Spleen (tissue), 13 donors: ENCODE measurements at regions of chr20 and their contacts with region 1.

Region 1: DNA sequence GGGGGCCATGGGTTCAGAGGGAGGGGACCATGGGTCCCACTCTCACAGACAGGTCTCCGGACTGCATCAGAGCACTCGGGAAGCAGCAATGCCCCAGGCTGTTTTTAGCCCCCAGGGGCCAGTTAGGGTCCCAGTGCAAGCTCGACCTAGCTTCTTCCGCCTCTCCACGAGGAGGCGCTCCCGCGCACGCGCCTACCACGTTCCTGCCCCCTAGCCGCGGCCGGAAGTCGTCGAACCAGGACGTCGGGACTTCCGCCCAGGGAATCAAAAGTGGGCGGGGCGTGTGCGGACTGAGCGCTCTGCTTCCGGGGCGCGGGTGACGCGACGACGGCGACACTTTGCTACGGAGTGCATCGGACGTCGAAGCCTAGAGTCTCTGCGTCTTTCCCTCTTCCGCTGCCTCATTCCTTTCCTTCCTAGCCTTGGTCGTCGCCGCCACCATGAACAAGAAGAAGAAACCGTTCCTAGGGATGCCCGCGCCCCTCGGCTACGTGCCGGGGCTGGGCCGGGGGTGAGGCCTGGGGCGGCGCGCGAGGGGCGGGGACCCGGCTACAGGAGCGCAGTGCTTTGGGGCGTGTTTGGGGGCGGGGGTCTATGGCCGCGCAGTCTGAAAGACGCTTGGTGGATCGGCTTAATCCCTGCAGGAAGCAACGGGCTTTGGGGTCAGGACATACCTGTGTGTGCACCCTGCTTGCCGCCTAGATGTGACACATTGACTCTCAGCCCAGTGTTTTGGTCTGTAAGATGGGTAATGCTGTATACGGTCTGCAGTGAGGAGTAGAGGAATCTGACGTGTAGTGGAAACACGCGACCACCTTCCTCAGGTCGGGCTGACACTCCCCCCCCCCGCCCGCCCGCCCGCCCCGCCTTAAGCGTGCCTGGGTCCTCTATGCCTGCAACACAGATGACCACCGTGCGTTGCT is at the start of gene PRPF6:
- DNase-seq: peak; percentile 99
- H3K4me3 ChIP-seq: peak within 1 kb of the TSS; percentile 70 to 96 (median 87)
- H3K27ac ChIP-seq: peak within 1 kb of the TSS; percentile 83 to 93 (median 90)
- H3K4me1 ChIP-seq: peaks cover 41 to 75% (median 57%) of the 10 kb centered on the region in 6 donors
- H3K27me3 ChIP-seq: no peaks in the 10 kb centered on the region
- CTCF ChIP-seq: peak; percentile 59 to 90 (median 84)
- POLR2A ChIP-seq: peak in 1 of 3 donors; percentile 15
- total RNA-seq, gene PRPF6: 53.4 to 71.1 (median 61.6) TPM

Region 2: DNA sequence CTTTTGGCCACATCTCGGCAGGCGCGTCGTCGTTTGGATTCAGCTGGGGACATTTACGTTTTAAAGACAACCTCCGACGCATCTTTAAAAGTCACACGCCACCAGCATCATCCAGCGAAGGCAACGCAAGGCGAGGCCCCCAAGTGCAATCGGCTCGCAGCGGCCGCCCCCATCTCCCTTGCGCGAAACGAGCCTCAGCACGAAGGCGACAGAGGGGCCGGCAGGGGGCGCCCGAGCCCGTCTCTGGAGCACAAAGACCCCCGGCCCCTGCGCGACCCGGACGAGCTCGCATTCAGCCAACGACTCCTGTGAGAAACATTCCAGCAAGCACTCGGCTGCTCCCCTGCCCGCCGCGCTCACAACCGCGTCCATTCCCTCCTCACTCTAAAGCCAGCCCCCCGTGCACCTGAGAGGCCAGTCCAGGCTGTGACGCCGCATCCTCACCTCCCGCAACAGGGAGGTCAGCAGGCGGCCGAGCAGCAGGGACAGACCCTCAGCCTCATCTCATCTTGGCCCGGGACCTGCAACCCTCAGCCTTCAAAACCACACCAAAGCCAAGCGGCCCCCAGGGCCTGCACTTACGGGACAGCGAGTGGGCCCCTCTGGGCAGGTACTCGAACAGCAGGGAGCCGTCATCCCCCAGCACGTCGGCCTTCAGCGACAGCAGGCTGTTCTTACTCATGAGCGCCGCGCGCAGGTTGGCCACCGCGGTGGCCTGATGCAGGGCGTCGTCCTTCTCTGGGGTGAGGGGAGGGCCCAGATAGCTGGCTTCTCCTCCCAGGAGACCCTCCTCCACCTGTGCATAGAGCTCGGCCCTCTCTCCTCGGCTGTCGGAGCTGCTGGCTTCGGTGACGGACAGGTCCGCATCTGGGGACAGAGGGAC is 205.7 kb before region 1 on chr20:
- intact Hi-C with region 1: no loop called
- DNase-seq: no peak
- H3K4me3 ChIP-seq: peak overlapping the region in 1 of 8 donors; percentile 39
- H3K27ac ChIP-seq: peak overlapping the region; percentile 6 to 92 (median 82)
- H3K4me1 ChIP-seq: peaks cover 0 to 77% (median 45%) of the 10 kb centered on the region in 6 donors
- H3K27me3 ChIP-seq: no peaks in the 10 kb centered on the region
- CTCF ChIP-seq: peak in 10 of 11 experiments; percentile 22 to 73 (median 60)
- POLR2A ChIP-seq: no peak

Region 3: DNA sequence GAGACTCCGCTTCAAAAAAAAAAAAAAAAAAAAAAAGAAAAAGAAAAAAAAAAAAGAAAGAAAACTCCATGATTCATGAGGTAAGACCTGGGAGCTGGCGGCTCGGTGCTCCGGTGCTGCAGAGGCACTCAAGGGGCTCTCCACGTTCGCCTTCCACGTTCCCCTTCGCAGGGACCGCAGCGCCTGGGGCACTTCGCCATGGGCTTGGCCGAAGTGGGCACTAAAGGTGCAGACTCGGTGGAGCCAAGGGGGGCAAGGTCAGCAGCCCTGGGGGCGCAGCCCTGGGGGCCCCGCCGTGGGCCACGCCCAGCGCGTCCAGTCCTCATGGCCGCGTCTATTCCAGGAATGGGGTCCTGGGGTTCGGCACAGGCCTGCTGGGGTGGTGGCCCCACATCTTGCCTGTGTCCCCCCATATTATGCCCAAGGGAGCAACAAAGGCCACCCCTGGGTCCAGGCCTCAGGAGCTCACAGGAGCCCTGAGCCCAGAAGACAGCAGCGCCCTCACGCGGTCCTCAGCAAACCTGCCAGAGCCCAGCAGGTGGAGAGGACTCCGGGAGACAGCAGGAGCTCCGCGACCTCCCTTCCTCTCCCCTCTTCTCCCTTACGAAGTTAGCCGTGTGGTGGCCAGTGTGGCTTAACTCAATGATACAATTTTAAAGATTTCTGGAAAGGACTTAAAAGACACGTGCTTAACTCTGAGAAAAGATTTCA is 171.9 kb before region 1 on chr20:
- intact Hi-C with region 1: no loop called
- DNase-seq: no peak
- H3K4me3 ChIP-seq: no peak overlapping the region
- H3K27ac ChIP-seq: peak overlapping the region in 5 of 8 donors; percentile 4 to 76 (median 73)
- H3K4me1 ChIP-seq: peaks cover 1 to 57% (median 33%) of the 10 kb centered on the region in 6 donors
- H3K27me3 ChIP-seq: no peaks in the 10 kb centered on the region
- CTCF ChIP-seq: no peak
- POLR2A ChIP-seq: no peak

Region 4: GRCh38 chr20:63819224-63819921 is 161.7 kb before region 1 on chr20:
- intact Hi-C with region 1: no loop called
- DNase-seq: no peak
- H3K4me3 ChIP-seq: peak overlapping the region in 3 of 8 donors; percentile 9 to 37 (median 23)
- H3K27ac ChIP-seq: peak overlapping the region; percentile 41 to 81 (median 64)
- H3K4me1 ChIP-seq: peaks cover 8 to 82% (median 41%) of the 10 kb centered on the region in 6 donors
- H3K27me3 ChIP-seq: no peaks in the 10 kb centered on the region
- CTCF ChIP-seq: peak in 7 of 11 experiments; percentile 8 to 51 (median 37)
- POLR2A ChIP-seq: no peak

Region 5: DNA sequence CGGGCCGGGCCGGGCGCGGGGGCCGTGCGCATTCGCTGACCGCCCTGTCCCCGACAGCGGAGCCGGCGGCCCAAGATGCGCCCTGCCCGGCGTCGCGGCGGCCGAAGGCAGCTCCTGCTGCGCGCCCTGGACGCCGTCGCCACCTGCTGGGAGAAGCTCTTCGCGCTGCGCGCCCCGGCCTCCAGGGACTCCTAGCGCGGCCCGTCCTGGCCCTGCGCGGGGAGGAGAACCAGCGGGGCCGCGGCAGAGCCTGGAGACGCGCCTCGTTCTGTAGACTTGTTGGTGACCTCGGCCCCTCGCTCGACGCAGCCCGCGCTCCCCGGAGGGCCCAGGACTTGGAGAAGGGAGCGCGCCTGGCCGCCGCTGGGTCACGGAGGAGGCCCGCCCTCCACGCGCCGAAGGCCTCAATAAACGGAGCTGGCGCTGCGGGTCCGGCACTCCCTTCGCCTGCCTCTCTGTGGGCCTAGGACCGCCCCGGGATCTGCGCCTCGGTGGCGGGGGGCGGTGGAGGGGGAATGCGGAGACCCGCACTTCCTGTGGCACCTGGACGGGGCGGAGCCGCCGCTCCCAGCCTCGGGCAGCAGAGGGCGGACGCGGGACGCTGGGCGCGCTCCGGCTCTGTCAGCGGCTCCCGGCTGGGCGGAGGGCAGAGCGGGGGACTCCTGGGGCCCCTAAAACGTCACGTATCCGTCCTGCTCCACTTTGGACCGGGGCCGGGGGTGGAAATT is 57.7 kb after region 1 on chr20:
- intact Hi-C with region 1: loop called (anchors 10 kb)
- DNase-seq: peak; percentile 97
- H3K4me3 ChIP-seq: peak overlapping the region; percentile 52 to 94 (median 66)
- H3K27ac ChIP-seq: peak overlapping the region; percentile 59 to 90 (median 84)
- H3K4me1 ChIP-seq: peaks cover 29 to 93% (median 72%) of the 10 kb centered on the region in 6 donors
- H3K27me3 ChIP-seq: peaks cover 0 to 63% (median 10%) of the 10 kb centered on the region in 7 donors
- CTCF ChIP-seq: peak; percentile 71 to 93 (median 89)
- POLR2A ChIP-seq: no peak

Region 6: DNA sequence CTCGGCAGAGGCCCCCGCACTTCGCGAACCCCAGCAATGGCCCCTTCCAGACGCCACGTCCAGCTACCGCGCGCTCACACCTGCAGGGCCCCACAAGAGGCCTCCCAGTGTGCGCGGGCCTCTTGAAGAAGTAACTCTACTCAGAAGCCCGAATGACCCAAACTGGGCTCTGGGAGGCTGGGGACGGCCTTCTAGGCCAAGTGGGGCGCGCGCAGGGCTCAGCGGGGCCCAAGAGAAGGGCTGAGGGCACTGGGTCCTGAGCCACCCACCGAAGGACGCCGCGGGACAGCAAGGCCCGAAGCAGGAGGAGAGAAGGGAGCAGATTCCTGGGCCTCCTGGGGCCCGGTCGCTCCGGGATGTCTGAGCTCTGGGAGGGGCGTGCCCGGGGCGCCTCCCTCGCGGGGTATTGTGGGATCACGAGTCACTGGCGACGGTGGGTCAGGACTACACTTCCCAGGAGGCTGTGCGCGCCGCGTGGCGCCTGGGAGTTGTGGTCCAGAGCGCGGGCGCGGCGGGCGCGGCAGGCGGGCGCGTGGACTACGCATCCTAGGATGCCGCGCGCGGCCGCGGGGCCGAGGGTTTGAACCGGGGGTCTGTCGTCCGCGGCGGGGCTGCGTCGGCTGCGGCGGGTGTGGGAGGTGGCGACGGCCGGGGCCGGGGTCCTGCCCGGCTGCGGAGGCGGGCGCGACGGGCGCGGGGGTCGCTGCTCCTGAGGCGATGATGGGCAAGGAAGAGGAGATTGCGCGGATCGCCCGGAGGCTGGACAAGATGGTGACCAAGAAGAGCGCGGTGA is 81.7 kb after region 1 on chr20 and contains the start of gene TCEA2:
- intact Hi-C with region 1: loop called (anchors 5 kb)
- DNase-seq: peak; percentile 99
- H3K4me3 ChIP-seq: peak within 1 kb of the TSS; percentile 50 to 98 (median 88)
- H3K27ac ChIP-seq: peak within 1 kb of the TSS; percentile 55 to 88 (median 82)
- H3K4me1 ChIP-seq: peaks cover 21 to 68% (median 63%) of the 10 kb centered on the region in 6 donors
- H3K27me3 ChIP-seq: no peaks in the 10 kb centered on the region
- CTCF ChIP-seq: peak in 2 of 11 experiments; percentile 8 to 27
- POLR2A ChIP-seq: peak in 2 of 3 donors; percentile 21 to 22
- total RNA-seq, gene TCEA2: 18.6 to 60.8 (median 45.0) TPM

Region 7: GRCh38 chr20:64119681-64120341 is 138.7 kb after region 1 on chr20:
- intact Hi-C with region 1: no loop called
- DNase-seq: peak; percentile 77
- H3K4me3 ChIP-seq: peak overlapping the region in 2 of 8 donors; percentile 17 to 58
- H3K27ac ChIP-seq: peak overlapping the region in 2 of 8 donors; percentile 40 to 55
- H3K4me1 ChIP-seq: peaks cover 0 to 15% (median 11%) of the 10 kb centered on the region in 6 donors
- H3K27me3 ChIP-seq: peaks cover 0 to 23% (median 6%) of the 10 kb centered on the region in 7 donors
- CTCF ChIP-seq: no peak
- POLR2A ChIP-seq: no peak